Endothelial cell of umbilical vein (primary cell): ENCODE measurements at regions of chr5 and their contacts with region 1.

Region 1: DNA sequence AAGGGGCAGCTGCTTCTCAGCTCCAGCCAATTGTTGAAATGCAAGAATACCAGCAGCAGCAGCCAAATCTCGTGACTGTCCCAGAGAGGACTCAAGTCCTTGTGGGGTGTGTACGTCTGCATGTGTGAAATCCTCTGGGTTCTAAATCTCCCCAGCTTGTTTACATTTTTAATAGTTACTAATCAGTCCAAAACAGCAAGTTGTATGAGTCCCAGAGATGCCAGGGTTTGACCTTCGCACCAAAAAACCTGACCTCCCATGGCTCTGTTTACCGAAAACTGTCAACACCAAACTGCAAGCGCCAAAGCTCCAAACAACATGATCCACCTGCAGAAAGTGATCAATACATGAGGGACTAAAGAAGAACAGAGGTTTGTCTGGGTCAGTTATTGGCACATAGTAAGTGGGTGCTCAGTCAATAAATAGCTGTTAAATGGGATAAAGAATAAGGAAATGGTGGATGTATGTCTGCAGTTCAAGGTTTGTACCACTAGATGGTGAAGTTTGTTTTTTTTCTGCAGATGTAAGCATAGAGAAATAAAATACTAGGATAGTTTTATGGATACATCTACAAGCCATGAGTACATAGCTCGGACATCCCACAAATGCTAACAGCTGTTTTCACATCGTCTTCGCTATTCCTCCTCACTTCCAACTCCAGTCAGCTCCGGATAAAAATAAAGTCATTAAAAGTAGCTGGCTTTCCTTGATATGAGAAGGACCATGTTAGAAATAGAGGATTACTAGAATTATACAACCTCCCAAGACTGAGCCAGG is 85.3 kb upstream of the ADRB2 start:
- DNase-seq: peak; percentile 82
- H3K4me3 ChIP-seq: no peak overlapping the region
- H3K27ac ChIP-seq: no peak overlapping the region
- H3K4me1 ChIP-seq: no peaks in the 10 kb centered on the region
- H3K27me3 ChIP-seq: no peaks in the 10 kb centered on the region
- CTCF ChIP-seq: peak; percentile 49
- POLR2A ChIP-seq: no peak

Region 2: DNA sequence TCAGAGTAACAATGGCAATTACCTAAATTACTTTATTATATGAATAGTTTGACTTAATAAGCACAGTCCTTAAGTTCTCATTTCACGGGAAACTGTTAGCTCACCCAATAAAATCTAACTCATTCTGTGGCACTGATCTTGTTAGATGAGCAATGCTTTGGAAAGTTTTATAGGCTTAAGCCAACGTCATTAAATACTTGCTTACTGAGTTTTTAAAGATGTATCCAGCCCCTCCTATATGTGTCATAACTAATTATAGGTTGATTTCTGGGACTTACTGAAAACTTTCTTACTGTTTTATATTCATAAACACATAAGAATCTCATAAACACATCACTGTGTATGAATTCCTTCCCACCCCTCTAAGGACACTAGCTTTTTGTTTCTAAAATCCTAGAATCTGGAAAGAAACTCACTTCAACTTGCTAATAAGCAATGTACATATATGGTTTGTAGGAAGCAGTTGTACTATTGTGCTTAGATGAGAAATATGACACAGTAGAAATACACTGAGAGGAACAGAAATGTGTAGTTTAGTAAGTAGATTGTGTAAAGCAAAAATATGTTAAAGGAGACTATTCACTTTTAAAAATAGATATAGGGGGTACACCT is 516.9 kb before region 1 on chr5:
- CTCF ChIA-PET with region 1: no interaction called
- POLR2A ChIA-PET with region 1: no interaction called
- dilution Hi-C with region 1: no loop called
- intact Hi-C with region 1: no loop called
- DNase-seq: no peak
- H3K4me3 ChIP-seq: no peak overlapping the region
- H3K27ac ChIP-seq: no peak overlapping the region
- H3K4me1 ChIP-seq: no peaks in the 10 kb centered on the region
- H3K27me3 ChIP-seq: no peaks in the 10 kb centered on the region
- CTCF ChIP-seq: no peak
- POLR2A ChIP-seq: no peak

Region 3: GRCh38 chr5:148796931-148797330 is 55.8 kb after region 1 on chr5:
- CTCF ChIA-PET with region 1: interaction called, 11 read pairs
- POLR2A ChIA-PET with region 1: no interaction called
- dilution Hi-C with region 1: no loop called
- intact Hi-C with region 1: no loop called
- DNase-seq: no peak
- H3K4me3 ChIP-seq: no peak overlapping the region
- H3K27ac ChIP-seq: no peak overlapping the region
- H3K4me1 ChIP-seq: no peaks in the 10 kb centered on the region
- H3K27me3 ChIP-seq: no peaks in the 10 kb centered on the region
- CTCF ChIP-seq: no peak
- POLR2A ChIP-seq: no peak

Region 4: GRCh38 chr5:148820461-148821395 is 79.6 kb after region 1 on chr5:
- CTCF ChIA-PET with region 1: interaction called, 60 read pairs
- POLR2A ChIA-PET with region 1: no interaction called
- dilution Hi-C with region 1: no loop called
- intact Hi-C with region 1: loop called (anchors 2 kb)
- DNase-seq: peak; percentile 45
- H3K4me3 ChIP-seq: no peak overlapping the region
- H3K27ac ChIP-seq: no peak overlapping the region
- H3K4me1 ChIP-seq: peaks cover 6% of the 10 kb centered on the region
- H3K27me3 ChIP-seq: no peaks in the 10 kb centered on the region
- CTCF ChIP-seq: peak; percentile 57 to 68
- POLR2A ChIP-seq: no peak

Region 5: DNA sequence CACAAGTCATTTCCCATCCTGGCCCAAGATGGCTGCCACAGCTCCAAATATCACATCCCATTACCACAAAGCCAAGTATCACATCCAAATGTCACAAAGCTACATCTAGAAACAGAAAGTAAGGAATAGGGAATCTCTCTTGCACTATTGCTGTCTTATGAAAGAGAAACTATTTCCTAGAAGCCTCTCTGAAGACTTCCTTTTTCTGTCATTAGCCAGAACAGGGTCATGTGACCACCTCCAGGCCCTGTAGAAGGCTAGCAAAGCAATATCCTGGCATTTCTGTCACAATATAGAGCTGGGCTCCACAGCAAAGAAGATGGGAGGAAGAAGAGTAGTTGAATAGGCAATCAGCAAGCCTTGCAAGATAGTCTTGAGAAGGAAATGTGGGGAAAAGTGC is 222.5 kb after region 1 on chr5:
- CTCF ChIA-PET with region 1: interaction called, 245 read pairs
- POLR2A ChIA-PET with region 1: no interaction called
- dilution Hi-C with region 1: no loop called
- intact Hi-C with region 1: no loop called
- DNase-seq: no peak
- H3K4me3 ChIP-seq: no peak overlapping the region
- H3K27ac ChIP-seq: no peak overlapping the region
- H3K4me1 ChIP-seq: peaks cover 16% of the 10 kb centered on the region
- H3K27me3 ChIP-seq: no peaks in the 10 kb centered on the region
- CTCF ChIP-seq: no peak
- POLR2A ChIP-seq: no peak

Region 6: DNA sequence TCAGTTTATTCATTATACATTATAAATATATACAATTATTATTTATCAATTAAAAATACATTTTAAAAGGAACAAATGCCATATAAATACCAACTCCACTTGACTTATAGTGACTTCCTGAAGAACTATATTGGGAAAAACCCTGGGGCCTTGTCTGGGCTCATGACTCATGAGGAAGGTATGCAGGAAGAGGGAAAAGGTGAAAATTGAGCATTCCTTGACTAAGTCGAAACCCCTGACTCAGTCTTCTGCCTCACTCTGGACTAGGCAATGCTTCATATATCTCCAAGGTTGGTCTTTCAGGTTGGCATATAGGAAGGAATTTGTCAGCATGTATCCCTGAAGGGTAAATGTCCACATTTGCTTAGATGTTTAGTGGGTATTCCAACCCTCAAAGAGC is 243.2 kb after region 1 on chr5:
- CTCF ChIA-PET with region 1: interaction called, 27 read pairs
- POLR2A ChIA-PET with region 1: no interaction called
- dilution Hi-C with region 1: no loop called
- intact Hi-C with region 1: no loop called
- DNase-seq: peak; percentile 52
- H3K4me3 ChIP-seq: no peak overlapping the region
- H3K27ac ChIP-seq: peak overlapping the region; percentile 61
- H3K4me1 ChIP-seq: peaks cover 15% of the 10 kb centered on the region
- H3K27me3 ChIP-seq: no peaks in the 10 kb centered on the region
- CTCF ChIP-seq: no peak
- POLR2A ChIP-seq: no peak

Region 7: GRCh38 chr5:148998174-148998797 is 257.1 kb after region 1 on chr5:
- CTCF ChIA-PET with region 1: interaction called, 167 read pairs
- POLR2A ChIA-PET with region 1: no interaction called
- dilution Hi-C with region 1: no loop called
- intact Hi-C with region 1: loop called (anchors 1 kb)
- DNase-seq: peak; percentile 68
- H3K4me3 ChIP-seq: no peak overlapping the region
- H3K27ac ChIP-seq: no peak overlapping the region
- H3K4me1 ChIP-seq: peaks cover 13% of the 10 kb centered on the region
- H3K27me3 ChIP-seq: no peaks in the 10 kb centered on the region
- CTCF ChIP-seq: peak; percentile 54 to 62
- POLR2A ChIP-seq: no peak

Region 8: DNA sequence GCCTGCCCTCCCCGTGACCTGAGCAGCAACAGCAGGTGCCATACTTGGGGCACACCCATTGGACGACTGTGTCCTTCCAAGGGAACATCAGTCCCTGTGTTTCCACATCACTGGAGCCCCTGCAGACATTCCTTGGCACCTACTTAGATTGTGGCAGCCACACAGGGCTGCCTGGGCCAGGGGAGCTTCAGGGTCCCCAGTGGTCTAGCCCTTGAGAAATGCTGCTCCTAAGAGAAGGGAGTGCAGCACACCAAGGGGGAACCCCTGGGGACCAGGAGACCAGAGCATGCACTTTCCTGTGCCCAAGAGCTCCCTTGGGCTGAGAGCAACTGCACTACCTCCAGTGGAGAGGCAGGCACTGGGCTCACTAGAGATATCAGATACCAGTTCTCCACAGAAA is 380.0 kb after region 1 on chr5:
- CTCF ChIA-PET with region 1: interaction called, 368 read pairs
- POLR2A ChIA-PET with region 1: no interaction called
- dilution Hi-C with region 1: loop called (anchors 25 kb)
- intact Hi-C with region 1: no loop called
- DNase-seq: no peak
- H3K4me3 ChIP-seq: no peak overlapping the region
- H3K27ac ChIP-seq: no peak overlapping the region
- H3K4me1 ChIP-seq: peaks cover 6% of the 10 kb centered on the region
- H3K27me3 ChIP-seq: no peaks in the 10 kb centered on the region
- CTCF ChIP-seq: no peak
- POLR2A ChIP-seq: no peak